ENCODE measurements at regions of chr15 and their contacts with region 1.

Region 1: GRCh38 chr15:40044717-40045571 is 6.0 kb upstream of the SRP14 start:
- DNase-seq: peak; percentile 92
- H3K4me3 ChIP-seq: peak overlapping the region; percentile 25 to 51; a peak in 3 of 4 replicates
- H3K27ac ChIP-seq: no peak overlapping the region; a peak in 2 of 4 replicates
- H3K4me1 ChIP-seq: peaks cover 23 to 29% of the 10 kb centered on the region in 2 experiments
- H3K27me3 ChIP-seq: no peaks in the 10 kb centered on the region
- CTCF ChIP-seq: peak; percentile 95
- EP300 ChIP-seq: no peak
- RAD21 ChIP-seq: peak; percentile 97

Region 2: GRCh38 chr15:40130799-40131502 is 86.0 kb after region 1 on chr15:
- CTCF ChIA-PET with region 1: no interaction called
- POLR2A ChIA-PET with region 1: no interaction called
- DNase-seq: no peak
- H3K4me3 ChIP-seq: no peak overlapping the region
- H3K27ac ChIP-seq: no peak overlapping the region
- H3K4me1 ChIP-seq: no peaks in the 10 kb centered on the region
- H3K27me3 ChIP-seq: peaks cover 20% of the 10 kb centered on the region; the same call in 1 of the 2 replicates
- CTCF ChIP-seq: no peak
- EP300 ChIP-seq: no peak
- RAD21 ChIP-seq: no peak

Region 3: DNA sequence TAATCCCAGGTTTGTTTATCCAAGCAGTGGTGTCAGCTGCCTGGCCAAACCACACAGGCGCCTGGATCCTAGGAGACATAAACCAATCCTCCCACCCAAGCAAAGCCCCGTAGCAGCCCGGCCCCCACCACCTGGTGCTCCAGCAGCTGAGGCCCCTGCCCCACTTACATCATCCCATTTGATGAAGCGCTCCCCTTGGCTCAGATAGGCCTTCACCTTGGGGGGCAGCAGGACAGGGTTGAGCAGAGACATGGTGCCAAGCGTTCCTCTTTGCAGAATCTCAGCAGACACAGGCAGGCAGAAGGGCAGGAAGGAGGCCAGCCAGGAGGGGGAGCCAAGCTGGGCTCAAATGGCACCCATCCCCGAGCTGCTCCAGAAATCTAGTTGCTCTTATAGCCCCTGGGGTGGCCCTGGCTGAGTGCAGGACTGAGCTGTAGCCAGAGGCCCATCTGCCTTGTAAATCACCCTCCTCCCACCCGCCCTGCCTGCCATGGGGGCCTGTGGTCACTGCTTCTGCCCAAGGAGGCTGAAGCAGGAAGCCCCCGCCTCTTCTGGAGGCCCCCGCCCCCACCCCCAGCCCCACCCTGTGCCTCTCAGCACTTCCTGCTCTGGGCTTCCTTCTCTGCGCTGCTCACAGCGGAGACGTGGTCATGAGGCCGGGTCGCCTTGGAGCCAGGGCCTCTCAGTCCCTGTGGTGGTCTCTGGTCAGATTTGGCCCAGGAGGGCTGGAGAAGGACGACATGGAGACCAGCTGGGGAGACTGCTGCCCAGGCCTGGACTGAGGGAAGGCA is 262.7 kb after region 1 on chr15 and contains the start of gene PLCB2:
- CTCF ChIA-PET with region 1: interaction called, 10 read pairs
- POLR2A ChIA-PET with region 1: no interaction called
- DNase-seq: no peak
- H3K4me3 ChIP-seq: no peak within 1 kb of the TSS
- H3K27ac ChIP-seq: no peak within 1 kb of the TSS
- H3K4me1 ChIP-seq: peaks cover 0 to 11% of the 10 kb centered on the region in 2 experiments; a peak in 1 of 4 replicates
- H3K27me3 ChIP-seq: no peaks in the 10 kb centered on the region; the same call in 1 of the 2 replicates
- CTCF ChIP-seq: peak; percentile 26; the same call in 1 of the 2 replicates
- EP300 ChIP-seq: no peak
- RAD21 ChIP-seq: no peak
- polyA plus RNA-seq, gene PLCB2: 0.15 TPM in 2 replicates